ENCODE measurements at regions of chr1 and their contacts with region 1.

Region 1: GRCh38 chr1:110495926-110496600 is 22.9 kb downstream of the KCNA10 start:
- DNase-seq: peak; percentile 71 to 75
- H3K4me3 ChIP-seq: no peak overlapping the region
- H3K27ac ChIP-seq: no peak overlapping the region
- H3K4me1 ChIP-seq: no peaks in the 10 kb centered on the region
- H3K27me3 ChIP-seq: peaks cover 39% of the 10 kb centered on the region
- CTCF ChIP-seq: peak; percentile 100

Region 2: DNA sequence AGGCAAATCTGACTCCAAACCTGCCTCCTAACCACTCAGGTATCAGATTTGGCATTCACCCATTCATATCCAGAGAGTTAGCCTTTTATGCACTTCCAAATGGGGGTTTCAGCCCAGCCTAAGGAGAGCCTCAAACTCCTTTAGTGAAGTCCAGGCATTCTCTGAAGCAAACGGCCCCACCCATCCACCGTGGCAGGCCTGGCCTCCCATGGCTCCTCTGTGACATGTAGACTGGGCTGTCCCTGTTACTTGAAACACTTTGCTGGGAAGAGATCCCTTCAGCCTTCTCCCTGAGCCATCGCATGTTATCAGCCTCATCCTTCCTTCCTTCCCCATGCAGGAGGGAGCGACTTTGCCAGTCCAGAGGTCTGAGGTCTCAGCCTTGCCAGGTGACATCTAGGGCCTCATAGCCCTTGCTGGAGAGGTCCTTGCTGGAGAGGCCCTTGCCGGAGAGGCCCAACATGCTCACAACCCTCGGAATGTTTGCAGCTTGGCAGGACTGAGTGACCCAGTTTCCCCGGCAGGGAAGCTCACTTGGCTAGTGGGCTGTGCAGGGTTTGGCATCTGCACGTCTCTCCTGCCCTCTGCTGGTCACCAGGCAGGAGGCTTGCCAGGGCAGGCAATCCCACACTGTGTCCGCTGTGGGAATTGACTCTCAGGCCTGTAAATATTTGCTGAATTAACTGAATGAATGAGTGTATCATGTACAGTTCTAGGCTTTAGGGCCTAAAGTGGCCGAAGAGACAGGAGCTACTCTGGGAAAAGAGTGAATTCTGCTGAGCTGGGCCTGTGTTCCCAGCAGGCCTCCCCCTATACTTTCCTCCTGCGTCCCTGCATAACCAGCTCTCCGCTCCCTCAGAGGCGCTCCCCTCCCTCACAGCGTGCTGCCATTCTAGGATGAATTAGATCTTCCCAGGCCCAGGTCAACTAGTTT is 183.6 kb before region 1 on chr1:
- CTCF ChIA-PET with region 1: no interaction called
- POLR2A ChIA-PET with region 1: no interaction called
- intact Hi-C with region 1: loop called (anchors 2 kb)
- DNase-seq: peak; percentile 72 to 74
- H3K4me3 ChIP-seq: no peak overlapping the region
- H3K27ac ChIP-seq: no peak overlapping the region
- H3K4me1 ChIP-seq: no peaks in the 10 kb centered on the region
- H3K27me3 ChIP-seq: no peaks in the 10 kb centered on the region
- CTCF ChIP-seq: peak; percentile 99

Region 3: GRCh38 chr1:110412576-110412975 is 83.5 kb before region 1 on chr1:
- CTCF ChIA-PET with region 1: interaction called, 16 read pairs
- POLR2A ChIA-PET with region 1: interaction called, 7 read pairs
- intact Hi-C with region 1: loop called (anchors 1 kb)
- DNase-seq: peak; percentile 60 to 74
- H3K4me3 ChIP-seq: no peak overlapping the region
- H3K27ac ChIP-seq: no peak overlapping the region
- H3K4me1 ChIP-seq: peaks cover 9% of the 10 kb centered on the region
- H3K27me3 ChIP-seq: no peaks in the 10 kb centered on the region
- CTCF ChIP-seq: peak; percentile 96

Measured in PC-9 (cell line).